CD8-positive, alpha-beta T cell (primary cell): ENCODE measurements at regions of chr17 and their contacts with region 1.

Region 1: GRCh38 chr17:36534840-36535668 is at the starts of genes MYO19 and PIGW:
- DNase-seq: peak; percentile 66 to 93 (median 83)
- ATAC-seq: peak; percentile 73
- H3K4me3 ChIP-seq: peak within 1 kb of the TSS; percentile 69 to 98
- H3K4me3 Mint-ChIP-seq: peak within 1 kb of the TSS; percentile 98
- H3K27ac ChIP-seq: peak within 1 kb of the TSS; percentile 93 to 98
- H3K27ac Mint-ChIP-seq: peak within 1 kb of the TSS; percentile 97
- H3K4me1 ChIP-seq: peaks cover 11% of the 10 kb centered on the region
- H3K4me1 Mint-ChIP-seq: peaks cover 16% of the 10 kb centered on the region
- H3K27me3 ChIP-seq: no peaks in the 10 kb centered on the region
- H3K27me3 Mint-ChIP-seq: no peaks in the 10 kb centered on the region
- CTCF ChIP-seq: no peak
- total RNA-seq, gene MYO19: 55.9 to 57.7 TPM
- total RNA-seq, gene PIGW: 2.3 to 3.4 TPM

Region 2: GRCh38 chr17:36486204-36487194 is 48.6 kb before region 1 on chr17 and contains the start of gene ZNHIT3:
- CTCF ChIA-PET with region 1: interaction called, 5 read pairs
- POLR2A ChIA-PET with region 1: interaction called, 17 read pairs
- intact Hi-C with region 1: loop called (anchors 1 to 2 kb)
- DNase-seq: peak; percentile 80 to 96 (median 90)
- ATAC-seq: peak; percentile 96
- H3K4me3 ChIP-seq: peak within 1 kb of the TSS; percentile 64 to 97
- H3K4me3 Mint-ChIP-seq: peak within 1 kb of the TSS; percentile 100
- H3K27ac ChIP-seq: peak within 1 kb of the TSS; percentile 69 to 70
- H3K27ac Mint-ChIP-seq: peak within 1 kb of the TSS; percentile 99
- H3K4me1 ChIP-seq: peaks cover 45% of the 10 kb centered on the region
- H3K4me1 Mint-ChIP-seq: peaks cover 55% of the 10 kb centered on the region
- H3K27me3 ChIP-seq: peaks cover 0 to 10% of the 10 kb centered on the region in 2 experiments
- H3K27me3 Mint-ChIP-seq: peaks cover 10% of the 10 kb centered on the region
- CTCF ChIP-seq: no peak
- total RNA-seq, gene ZNHIT3: 82.2 to 87.1 TPM

Region 3: GRCh38 chr17:36545465-36546417 is 10.7 kb after region 1 on chr17:
- CTCF ChIA-PET with region 1: interaction called, 6 read pairs
- POLR2A ChIA-PET with region 1: interaction called, 72 read pairs
- intact Hi-C with region 1: loop called (anchors 1 kb)
- DNase-seq: peak; percentile 92 to 99 (median 97)
- ATAC-seq: peak; percentile 76
- H3K4me3 ChIP-seq: peak overlapping the region; percentile 66 to 94
- H3K4me3 Mint-ChIP-seq: peak overlapping the region; percentile 95
- H3K27ac ChIP-seq: peak overlapping the region; percentile 67 to 96
- H3K27ac Mint-ChIP-seq: peak overlapping the region; percentile 96
- H3K4me1 ChIP-seq: peaks cover 44% of the 10 kb centered on the region
- H3K4me1 Mint-ChIP-seq: peaks cover 50% of the 10 kb centered on the region
- H3K27me3 ChIP-seq: no peaks in the 10 kb centered on the region
- H3K27me3 Mint-ChIP-seq: no peaks in the 10 kb centered on the region
- CTCF ChIP-seq: no peak

Region 4: DNA sequence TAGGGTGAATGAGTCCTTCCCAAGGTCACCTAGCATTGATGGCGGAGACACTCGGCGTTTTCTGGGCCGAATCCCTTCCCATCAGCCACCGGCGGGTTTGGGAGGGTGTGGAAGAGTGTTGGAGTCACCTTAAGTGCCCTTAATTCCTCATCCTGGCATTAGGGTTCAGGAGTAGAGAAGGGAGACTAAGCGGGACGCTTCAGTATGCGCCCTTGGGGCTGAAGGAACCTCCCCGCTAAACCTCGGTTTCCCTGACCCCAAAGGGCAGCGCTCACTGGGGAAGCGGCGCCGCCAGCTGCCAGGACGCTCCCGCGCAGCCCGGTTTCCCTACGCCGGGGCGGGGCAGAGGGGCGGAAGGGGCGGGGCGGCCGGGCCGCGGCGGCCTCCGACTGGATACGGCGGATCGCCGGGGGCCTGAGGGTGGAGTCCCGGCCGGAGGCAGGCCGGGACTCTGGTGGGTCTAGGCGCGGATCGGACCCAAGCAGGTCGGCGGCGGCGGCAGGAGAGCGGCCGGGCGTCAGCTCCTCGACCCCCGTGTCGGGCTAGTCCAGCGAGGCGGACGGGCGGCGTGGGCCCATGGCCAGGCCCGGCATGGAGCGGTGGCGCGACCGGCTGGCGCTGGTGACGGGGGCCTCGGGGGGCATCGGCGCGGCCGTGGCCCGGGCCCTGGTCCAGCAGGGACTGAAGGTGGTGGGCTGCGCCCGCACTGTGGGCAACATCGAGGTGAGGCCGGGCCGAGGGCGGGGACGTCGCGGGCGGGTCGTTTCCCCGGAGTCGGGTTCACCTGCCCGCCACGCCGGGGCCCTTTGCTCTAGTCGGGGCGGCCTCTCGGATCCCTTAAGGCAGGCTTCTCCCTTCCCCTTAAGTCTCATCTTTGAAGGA is 56.6 kb after region 1 on chr17 and contains the start of gene DHRS11:
- CTCF ChIA-PET with region 1: no interaction called
- POLR2A ChIA-PET with region 1: interaction called, 4 read pairs
- intact Hi-C with region 1: loop called in 1 of 2 experiments (anchors 2 kb)
- DNase-seq: peak; percentile 30 to 84 (median 76)
- ATAC-seq: peak; percentile 93
- H3K4me3 ChIP-seq: peak within 1 kb of the TSS; percentile 55 to 60
- H3K4me3 Mint-ChIP-seq: peak within 1 kb of the TSS; percentile 82
- H3K27ac ChIP-seq: peak within 1 kb of the TSS; percentile 42 to 44
- H3K27ac Mint-ChIP-seq: peak within 1 kb of the TSS; percentile 88
- H3K4me1 ChIP-seq: peaks cover 14% of the 10 kb centered on the region
- H3K4me1 Mint-ChIP-seq: peaks cover 24% of the 10 kb centered on the region
- H3K27me3 ChIP-seq: no peaks in the 10 kb centered on the region
- H3K27me3 Mint-ChIP-seq: no peaks in the 10 kb centered on the region
- CTCF ChIP-seq: no peak
- total RNA-seq, gene DHRS11: 1.7 to 2.6 TPM

Region 5: GRCh38 chr17:36722121-36722902 is 187.3 kb after region 1 on chr17:
- CTCF ChIA-PET with region 1: no interaction called
- POLR2A ChIA-PET with region 1: no interaction called
- intact Hi-C with region 1: loop called in 1 of 2 experiments (anchors 1 kb)
- DNase-seq: peak; percentile 53 to 91 (median 77)
- ATAC-seq: peak; percentile 95
- H3K4me3 ChIP-seq: peak overlapping the region; percentile 49 to 61
- H3K4me3 Mint-ChIP-seq: peak overlapping the region; percentile 84
- H3K27ac ChIP-seq: peak overlapping the region; percentile 66 to 82
- H3K27ac Mint-ChIP-seq: peak overlapping the region; percentile 99
- H3K4me1 ChIP-seq: peaks cover 42% of the 10 kb centered on the region
- H3K4me1 Mint-ChIP-seq: peaks cover 60% of the 10 kb centered on the region
- H3K27me3 ChIP-seq: no peaks in the 10 kb centered on the region
- H3K27me3 Mint-ChIP-seq: no peaks in the 10 kb centered on the region
- CTCF ChIP-seq: no peak

Region 6: GRCh38 chr17:36934692-36935630 is 399.9 kb after region 1 on chr17:
- CTCF ChIA-PET with region 1: no interaction called
- POLR2A ChIA-PET with region 1: no interaction called
- intact Hi-C with region 1: loop called in 1 of 2 experiments (anchors 5 kb)
- DNase-seq: peak in 4 of 9 experiments; percentile 38 to 59 (median 52)
- ATAC-seq: peak; percentile 21
- H3K4me3 ChIP-seq: peak overlapping the region; percentile 18 to 24
- H3K4me3 Mint-ChIP-seq: peak overlapping the region; percentile 60
- H3K27ac ChIP-seq: no peak overlapping the region
- H3K27ac Mint-ChIP-seq: no peak overlapping the region
- H3K4me1 ChIP-seq: peaks cover 79% of the 10 kb centered on the region
- H3K4me1 Mint-ChIP-seq: peaks cover 67% of the 10 kb centered on the region
- H3K27me3 ChIP-seq: peaks cover 88 to 96% of the 10 kb centered on the region in 2 experiments
- H3K27me3 Mint-ChIP-seq: peaks cover 83% of the 10 kb centered on the region
- CTCF ChIP-seq: no peak